ENCODE measurements at regions of chr1 and their contacts with region 1.

Region 1: DNA sequence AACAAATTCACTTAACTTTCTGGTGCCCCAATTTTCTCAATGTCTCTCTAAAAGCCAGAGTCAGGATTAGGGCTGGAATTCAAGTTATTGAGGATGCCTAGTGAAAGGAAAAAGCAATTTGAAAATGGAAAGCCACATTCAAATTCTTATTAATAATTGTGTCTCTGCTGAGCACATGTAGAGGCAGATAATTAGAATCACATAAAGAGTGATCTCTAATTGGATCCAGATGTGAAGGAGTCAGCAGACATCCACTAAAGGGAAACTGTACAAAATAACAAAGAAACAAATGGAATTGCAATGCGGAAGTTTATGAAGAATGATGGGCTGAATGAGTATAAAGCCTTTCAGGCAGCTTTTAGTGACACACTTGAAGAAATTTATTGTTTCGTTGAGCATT is 482.6 kb downstream of the TTLL7 start:
- DNase-seq: no peak
- H3K4me3 Mint-ChIP-seq: no peak overlapping the region
- H3K27ac Mint-ChIP-seq: peak overlapping the region; percentile 83
- H3K4me1 Mint-ChIP-seq: peaks cover 36% of the 10 kb centered on the region
- H3K27me3 Mint-ChIP-seq: no peaks in the 10 kb centered on the region

Region 2: GRCh38 chr1:83500987-83501591 is 15.3 kb before region 1 on chr1:
- intact Hi-C with region 1: loop called (anchors 1 kb)
- DNase-seq: no peak
- H3K4me3 Mint-ChIP-seq: peak overlapping the region; percentile 17
- H3K27ac Mint-ChIP-seq: peak overlapping the region; percentile 56
- H3K4me1 Mint-ChIP-seq: peaks cover 50% of the 10 kb centered on the region
- H3K27me3 Mint-ChIP-seq: no peaks in the 10 kb centered on the region

Region 3: DNA sequence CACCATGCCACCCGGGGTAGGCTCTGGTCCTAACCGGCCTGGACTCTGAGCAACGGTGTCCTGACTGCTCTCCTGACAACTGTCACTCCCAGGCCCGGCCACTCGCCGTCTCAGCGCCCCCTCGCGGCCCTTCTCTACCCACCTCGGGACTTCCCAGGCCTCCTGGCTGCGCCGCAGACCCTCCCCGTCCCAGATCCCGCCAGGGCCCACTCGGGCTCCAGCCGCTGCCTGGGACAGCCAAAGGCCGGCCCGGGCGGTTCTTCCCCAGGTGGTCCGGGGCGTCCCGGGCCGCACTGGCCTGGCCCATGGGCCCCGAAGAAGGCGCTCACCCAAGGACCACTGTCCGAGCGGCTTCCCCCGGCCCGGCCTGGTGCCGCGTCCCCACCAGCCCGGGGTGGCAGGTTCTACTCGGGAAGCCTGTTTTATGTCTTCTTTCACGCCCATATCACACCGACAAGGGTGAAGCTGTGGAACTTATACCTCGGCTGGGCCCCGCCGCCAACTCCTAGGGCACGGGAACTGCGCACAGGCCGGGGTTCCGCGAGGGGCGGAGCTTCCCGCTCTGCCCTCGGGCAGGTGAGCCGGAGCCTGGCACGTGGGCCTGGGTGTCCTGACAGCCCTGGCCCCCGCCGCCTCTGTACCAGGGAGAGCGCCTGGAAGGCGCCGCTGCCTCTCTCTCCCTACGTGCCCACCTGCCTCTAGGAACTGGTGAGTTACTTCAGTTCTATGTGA is 344.3 kb after region 1 on chr1:
- intact Hi-C with region 1: loop called (anchors 10 kb)
- DNase-seq: peak; percentile 60
- H3K4me3 Mint-ChIP-seq: peak overlapping the region; percentile 80
- H3K27ac Mint-ChIP-seq: peak overlapping the region; percentile 48
- H3K4me1 Mint-ChIP-seq: peaks cover 14% of the 10 kb centered on the region
- H3K27me3 Mint-ChIP-seq: no peaks in the 10 kb centered on the region

Region 4: DNA sequence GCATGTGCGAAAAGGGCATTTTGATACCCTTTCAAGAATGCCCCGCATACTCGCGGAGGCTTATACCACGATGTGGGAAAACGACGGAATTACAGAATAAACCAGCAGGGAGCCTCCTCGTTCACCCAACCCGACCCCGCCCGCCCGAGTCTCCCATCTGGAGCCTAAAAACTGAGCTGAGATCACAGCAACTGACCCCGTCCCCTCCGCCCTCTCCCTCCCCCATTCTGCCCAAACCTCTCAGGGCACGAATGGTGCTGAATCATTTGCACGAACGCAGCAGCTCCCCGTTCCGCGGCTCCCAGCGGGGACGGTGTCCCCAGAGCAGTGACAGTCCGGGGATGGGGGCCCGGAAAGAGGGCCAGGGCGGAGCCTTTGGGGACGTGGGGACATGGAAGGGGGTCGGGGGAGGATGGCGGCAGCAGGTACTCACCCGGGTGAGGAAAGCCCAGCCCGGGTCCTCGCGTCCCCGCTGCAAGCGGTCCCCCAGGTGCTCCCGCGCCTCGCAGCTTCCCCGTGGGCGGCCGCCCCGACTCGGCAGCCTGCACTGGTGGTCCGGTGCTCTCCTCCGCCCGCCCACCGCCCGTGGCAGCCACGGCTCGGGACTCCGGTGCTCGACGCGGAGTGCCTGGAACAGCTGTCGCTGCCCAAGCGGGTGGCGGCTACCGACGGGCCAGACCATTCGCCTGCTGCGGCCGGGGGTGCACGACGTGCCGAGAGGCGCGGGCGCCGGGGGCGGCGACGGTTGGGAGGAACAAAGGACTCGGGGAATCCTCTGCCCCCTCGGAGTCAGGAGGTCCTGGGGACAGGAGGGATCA is 482.3 kb after region 1 on chr1 and contains the start of gene TTLL7:
- intact Hi-C with region 1: no loop called
- DNase-seq: peak; percentile 62
- H3K4me3 Mint-ChIP-seq: peak within 1 kb of the TSS; percentile 89
- H3K27ac Mint-ChIP-seq: peak within 1 kb of the TSS; percentile 56
- H3K4me1 Mint-ChIP-seq: peaks cover 24% of the 10 kb centered on the region
- H3K27me3 Mint-ChIP-seq: peaks cover 60% of the 10 kb centered on the region
- total RNA-seq, gene TTLL7: 0.15 and 0.29 TPM in 2 replicates

Measured in activated T-helper 1 cell treated with anti-CD3 and anti-CD28 coated beads, Interleukin-12 subunit alpha, Interleukin-12 subunit beta, Interleukin-2, Interleukin-4 antibody, amounts not matched to agents 30 ng/mL and 10 ng/mL and 1 ng/mL, durations not matched to agents 14 hours and 24 hours and 36 hours (primary cell).